AG04450 (cell line): ENCODE measurements at regions of chr7 and their contacts with region 1.

Region 1: DNA sequence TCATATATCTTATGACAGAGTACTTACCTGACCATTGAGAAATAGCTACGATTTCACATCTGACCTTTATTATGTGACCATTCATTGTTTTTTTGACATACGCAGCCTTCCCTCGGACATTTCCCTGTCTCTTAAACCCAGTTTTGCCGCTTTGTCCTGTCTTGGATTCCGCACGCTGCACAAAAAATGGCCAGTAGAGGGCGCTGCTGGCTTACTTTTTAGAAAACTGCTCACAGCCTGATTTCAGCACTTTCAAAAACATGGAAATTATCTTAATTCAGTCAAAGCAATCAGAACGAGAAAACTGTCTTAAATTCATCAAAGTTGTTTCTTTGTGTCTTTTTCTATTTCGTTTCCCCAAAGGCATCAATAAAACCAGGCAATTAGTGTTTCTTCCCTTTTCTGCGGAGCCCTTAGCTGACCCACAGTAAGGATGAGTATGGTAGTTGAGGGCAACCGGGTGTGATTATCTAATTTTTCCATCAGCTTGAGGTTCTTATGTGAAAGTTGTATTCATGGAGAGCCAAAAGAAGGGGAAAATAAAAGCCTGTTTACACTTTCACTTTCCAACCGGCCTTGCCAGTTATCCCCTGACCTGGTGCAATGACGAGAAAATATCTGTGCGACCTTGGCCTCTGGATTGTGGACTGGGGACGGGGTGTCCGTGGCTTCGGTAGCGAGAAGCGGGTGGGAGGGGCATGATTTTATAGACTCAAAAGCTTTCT is 144.4 kb downstream of the DYNC1I1 start:
- DNase-seq: peak; percentile 42
- H3K4me3 ChIP-seq: no peak overlapping the region
- H3K27ac ChIP-seq: no peak overlapping the region
- H3K27me3 ChIP-seq: no peaks in the 10 kb centered on the region
- CTCF ChIP-seq: peak; percentile 93

Region 2: DNA sequence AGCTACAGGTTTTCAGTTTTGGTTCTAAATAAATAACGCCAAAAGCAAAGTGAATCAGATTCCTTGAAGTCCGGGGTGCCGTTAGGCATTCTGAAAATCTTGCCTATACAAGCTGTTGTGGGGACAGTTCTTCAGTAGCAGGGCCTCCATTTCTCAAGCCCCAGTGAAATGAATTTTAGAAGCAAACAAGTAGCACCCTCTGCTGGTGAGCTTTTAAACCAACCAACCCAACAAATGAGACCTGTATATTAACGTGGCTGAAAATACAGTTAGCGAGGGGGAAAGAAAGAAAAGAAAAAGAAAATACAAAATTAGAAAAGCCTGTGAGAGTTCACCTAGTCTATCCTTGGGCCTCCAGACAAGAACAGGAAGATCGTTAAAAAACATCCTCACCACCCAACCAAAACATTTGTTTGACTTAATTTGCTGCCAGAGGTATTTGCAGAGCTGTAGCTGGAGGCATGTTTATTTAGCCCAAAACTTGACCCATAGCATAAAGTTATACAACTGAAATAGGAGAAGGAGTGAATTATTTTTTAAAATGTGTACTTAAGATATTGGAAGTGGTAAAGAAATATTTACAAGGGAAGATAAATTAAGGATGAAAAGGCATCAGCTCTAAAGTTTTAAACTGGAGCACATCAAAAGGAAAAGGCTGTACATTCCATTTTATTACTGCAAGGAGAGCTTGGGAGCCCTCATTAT is 45.5 kb before region 1 on chr7:
- CTCF ChIA-PET with region 1: interaction called, 12 read pairs
- POLR2A ChIA-PET with region 1: no interaction called
- DNase-seq: peak; percentile 7
- H3K4me3 ChIP-seq: no peak overlapping the region
- H3K27ac ChIP-seq: no peak overlapping the region
- H3K27me3 ChIP-seq: no peaks in the 10 kb centered on the region
- CTCF ChIP-seq: peak; percentile 67

Region 3: GRCh38 chr7:95886501-95887090 is 30.1 kb before region 1 on chr7:
- CTCF ChIA-PET with region 1: no interaction called
- POLR2A ChIA-PET with region 1: no interaction called
- DNase-seq: no peak
- H3K4me3 ChIP-seq: no peak overlapping the region
- H3K27ac ChIP-seq: no peak overlapping the region
- H3K27me3 ChIP-seq: no peaks in the 10 kb centered on the region
- CTCF ChIP-seq: no peak

Region 4: GRCh38 chr7:95899919-95900513 is 16.7 kb before region 1 on chr7:
- CTCF ChIA-PET with region 1: interaction called, 41 read pairs
- POLR2A ChIA-PET with region 1: no interaction called
- DNase-seq: no peak
- H3K4me3 ChIP-seq: no peak overlapping the region
- H3K27ac ChIP-seq: no peak overlapping the region
- H3K27me3 ChIP-seq: no peaks in the 10 kb centered on the region
- CTCF ChIP-seq: no peak

Region 5: GRCh38 chr7:97027427-97028234 is 1110.9 kb after region 1 on chr7:
- CTCF ChIA-PET with region 1: interaction called, 156 read pairs
- POLR2A ChIA-PET with region 1: no interaction called
- DNase-seq: peak; percentile 69
- H3K4me3 ChIP-seq: peak overlapping the region; percentile 46
- H3K27ac ChIP-seq: no peak overlapping the region
- H3K27me3 ChIP-seq: peaks cover 48% of the 10 kb centered on the region
- CTCF ChIP-seq: peak; percentile 90

Region 6: DNA sequence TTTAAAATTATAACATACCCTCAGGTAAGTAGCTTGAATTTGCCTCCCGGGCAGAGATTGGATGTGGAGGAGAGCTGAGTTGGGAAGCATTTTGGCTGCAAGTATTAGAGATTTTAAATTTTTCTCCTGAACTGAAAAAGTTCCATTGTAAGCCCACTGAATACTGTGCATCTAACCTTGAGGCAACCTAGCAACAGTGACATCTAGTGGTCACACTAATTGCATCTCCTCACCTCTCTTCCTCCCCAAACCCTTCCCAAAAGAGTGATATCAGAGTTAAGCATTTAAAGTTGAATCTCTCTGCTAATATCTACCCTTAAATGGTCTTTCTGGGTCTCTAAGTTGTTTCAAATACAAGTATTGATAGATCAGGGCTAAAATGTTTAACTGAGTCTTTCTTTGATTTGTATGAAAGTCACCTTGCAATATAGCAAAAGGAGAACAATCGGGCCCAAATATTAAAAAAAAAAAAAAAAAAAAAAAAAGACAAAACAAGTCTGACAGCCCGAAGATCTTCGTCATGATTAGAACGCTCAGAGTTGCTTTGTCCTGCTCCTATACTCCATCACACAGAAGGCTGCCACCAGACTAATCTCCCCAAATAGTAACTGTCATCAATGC is 1148.3 kb after region 1 on chr7:
- CTCF ChIA-PET with region 1: interaction called, 81 read pairs
- POLR2A ChIA-PET with region 1: no interaction called
- DNase-seq: peak; percentile 11
- H3K4me3 ChIP-seq: no peak overlapping the region
- H3K27ac ChIP-seq: no peak overlapping the region
- H3K27me3 ChIP-seq: no peaks in the 10 kb centered on the region
- CTCF ChIP-seq: peak; percentile 80